ENCODE measurements at regions of chr13 and their contacts with region 1.

Region 1: GRCh38 chr13:77740931-77741596 is 43.6 kb downstream of the SLAIN1 start:
- DNase-seq: no peak
- H3K4me3 ChIP-seq: no peak overlapping the region
- H3K27ac ChIP-seq: no peak overlapping the region
- H3K4me1 ChIP-seq: no peaks in the 10 kb centered on the region
- H3K27me3 ChIP-seq: no peaks in the 10 kb centered on the region
- CTCF ChIP-seq: no peak
- POLR2A ChIP-seq: no peak

Region 2: GRCh38 chr13:77599351-77599750 is 141.7 kb before region 1 on chr13:
- intact Hi-C with region 1: loop called (anchors 10 kb)
- DNase-seq: no peak
- H3K4me3 ChIP-seq: no peak overlapping the region
- H3K27ac ChIP-seq: no peak overlapping the region
- H3K4me1 ChIP-seq: no peaks in the 10 kb centered on the region
- H3K27me3 ChIP-seq: no peaks in the 10 kb centered on the region
- CTCF ChIP-seq: no peak
- POLR2A ChIP-seq: no peak